ENCODE measurements at regions of chr3 and their contacts with region 1.

Region 1: GRCh38 chr3:183540501-183541234 is 14.8 kb downstream of the KLHL6 start:
- DNase-seq: no peak
- H3K4me3 Mint-ChIP-seq: no peak overlapping the region
- H3K27ac Mint-ChIP-seq: peak overlapping the region; percentile 15
- H3K4me1 Mint-ChIP-seq: peaks cover 84% of the 10 kb centered on the region
- H3K27me3 Mint-ChIP-seq: no peaks in the 10 kb centered on the region

Region 2: DNA sequence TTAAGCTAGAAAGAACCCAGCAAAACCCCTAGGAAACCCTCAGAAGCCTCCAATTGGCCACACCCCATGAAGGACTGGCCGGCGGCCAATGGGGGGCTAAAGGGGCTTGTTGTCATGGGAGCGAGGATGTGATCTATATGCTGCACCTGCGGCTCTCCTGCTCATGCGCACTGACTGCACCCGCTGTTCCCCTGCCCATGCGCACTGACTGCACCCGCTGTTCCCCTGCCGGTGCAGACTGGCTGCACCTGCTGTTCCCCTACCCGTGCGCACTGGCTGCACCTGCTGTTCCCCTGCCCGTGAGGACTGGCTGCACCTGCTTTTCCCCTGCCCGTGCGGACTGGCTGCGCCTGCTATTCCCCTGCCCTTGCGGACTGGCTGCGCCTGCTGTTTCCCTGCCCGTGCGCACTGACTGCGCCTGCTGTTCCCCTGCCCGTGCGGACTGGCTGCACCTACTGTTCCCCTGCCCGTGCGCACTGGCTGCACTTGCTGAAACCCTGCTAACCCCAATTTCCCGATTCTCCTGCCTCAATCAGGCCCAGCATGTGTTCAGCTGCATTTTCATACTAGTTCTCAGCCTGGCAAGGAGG is 424.5 kb before region 1 on chr3:
- CTCF ChIA-PET with region 1: no interaction called
- POLR2A ChIA-PET with region 1: no interaction called
- intact Hi-C with region 1: no loop called
- DNase-seq: peak; percentile 69
- H3K4me3 Mint-ChIP-seq: peak overlapping the region; percentile 67
- H3K27ac Mint-ChIP-seq: no peak overlapping the region
- H3K4me1 Mint-ChIP-seq: peaks cover 4% of the 10 kb centered on the region
- H3K27me3 Mint-ChIP-seq: peaks cover 17% of the 10 kb centered on the region

Region 3: GRCh38 chr3:183527428-183528379 is 13.0 kb before region 1 on chr3:
- CTCF ChIA-PET with region 1: no interaction called
- POLR2A ChIA-PET with region 1: no interaction called
- intact Hi-C with region 1: loop called (anchors 2 kb)
- DNase-seq: peak; percentile 31
- H3K4me3 Mint-ChIP-seq: no peak overlapping the region
- H3K27ac Mint-ChIP-seq: peak overlapping the region; percentile 82
- H3K4me1 Mint-ChIP-seq: peaks cover 66% of the 10 kb centered on the region
- H3K27me3 Mint-ChIP-seq: no peaks in the 10 kb centered on the region